ENCODE measurements at regions of chr6 and their contacts with region 1.

Region 1: DNA sequence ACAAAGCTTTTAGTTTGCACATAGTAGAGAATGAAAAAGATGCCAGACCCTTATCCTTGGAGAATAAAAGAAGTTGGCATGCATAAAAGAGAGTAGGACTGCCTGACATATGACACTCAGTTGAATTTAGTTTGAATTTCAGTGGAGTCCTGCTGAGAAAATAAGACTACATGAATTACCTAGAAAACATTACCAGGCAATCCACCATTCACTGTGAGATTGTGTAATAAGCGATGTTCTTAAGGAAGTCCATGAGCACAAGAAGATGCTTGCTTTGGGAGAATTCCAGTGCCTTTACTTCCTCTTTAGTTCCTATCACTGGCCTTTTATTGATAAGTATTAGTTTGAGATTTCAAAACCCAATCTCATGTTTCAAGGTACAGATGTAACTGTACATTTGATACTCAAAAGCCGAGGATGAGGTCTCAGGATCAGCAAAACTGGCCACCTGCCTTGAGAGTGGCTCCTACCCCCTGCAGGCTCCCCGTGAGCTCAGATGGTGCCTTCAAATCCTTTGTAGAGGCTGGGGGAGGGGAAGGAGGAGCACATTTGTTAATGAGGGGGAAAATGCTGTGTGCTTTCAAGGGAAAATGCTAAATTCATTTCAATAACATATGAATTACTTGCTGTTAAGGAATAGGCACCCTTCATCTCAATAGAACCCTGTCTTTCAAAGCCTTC is 11.2 kb upstream of the UNC93A start:
- DNase-seq: no peak
- ATAC-seq: no peak
- H3K4me3 ChIP-seq: no peak overlapping the region
- H3K27ac ChIP-seq: no peak overlapping the region
- H3K4me1 ChIP-seq: no peaks in the 10 kb centered on the region
- H3K27me3 ChIP-seq: peaks cover 0 to 36% (median 22%) of the 10 kb centered on the region in 7 donors
- CTCF ChIP-seq: no peak

Region 2: DNA sequence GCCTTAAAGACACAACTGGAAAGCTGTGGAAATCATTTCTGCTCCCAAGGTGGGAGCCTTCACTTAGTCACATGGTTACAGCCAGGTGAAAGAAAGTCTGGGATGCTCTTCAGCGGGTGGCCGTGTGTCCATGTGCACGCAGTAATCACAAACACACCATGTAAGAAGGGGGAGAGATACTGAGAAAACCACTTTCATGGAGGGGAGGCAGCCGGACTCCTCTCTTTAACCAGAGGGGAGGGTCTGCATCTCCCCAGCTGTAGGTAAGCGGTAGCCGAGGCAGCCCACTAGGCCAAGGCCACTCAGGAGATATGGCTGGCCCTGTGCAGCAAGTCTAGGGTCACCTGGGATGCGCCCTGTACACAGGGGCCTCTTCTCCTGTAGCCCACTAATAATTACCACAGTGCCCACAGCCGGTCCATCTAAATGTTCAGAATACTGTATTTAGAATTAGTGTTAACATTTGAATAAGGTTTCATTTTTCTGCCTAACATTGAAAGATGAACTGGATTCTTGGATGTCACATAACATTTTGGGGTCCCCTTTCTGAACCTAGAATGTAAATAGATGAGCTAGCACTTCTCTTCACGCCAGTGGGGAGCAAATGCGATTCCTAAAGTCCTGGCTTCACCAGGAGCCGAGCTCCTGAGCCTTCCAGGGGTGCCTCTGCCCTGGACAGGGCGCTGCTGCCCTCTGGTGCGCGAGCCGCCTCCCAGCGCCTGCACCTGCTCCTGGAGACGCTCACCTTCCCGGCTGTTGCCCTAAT is 138.1 kb before region 1 on chr6:
- intact Hi-C with region 1: no loop called
- DNase-seq: peak; percentile 18 to 56
- ATAC-seq: peak; percentile 71 to 91 (median 86)
- H3K4me3 ChIP-seq: no peak overlapping the region
- H3K27ac ChIP-seq: no peak overlapping the region
- H3K4me1 ChIP-seq: peaks cover 0 to 5% (median 0%) of the 10 kb centered on the region in 9 donors
- H3K27me3 ChIP-seq: peaks cover 0 to 69% (median 54%) of the 10 kb centered on the region in 7 donors
- CTCF ChIP-seq: peak; percentile 50 to 82 (median 76)

Region 3: DNA sequence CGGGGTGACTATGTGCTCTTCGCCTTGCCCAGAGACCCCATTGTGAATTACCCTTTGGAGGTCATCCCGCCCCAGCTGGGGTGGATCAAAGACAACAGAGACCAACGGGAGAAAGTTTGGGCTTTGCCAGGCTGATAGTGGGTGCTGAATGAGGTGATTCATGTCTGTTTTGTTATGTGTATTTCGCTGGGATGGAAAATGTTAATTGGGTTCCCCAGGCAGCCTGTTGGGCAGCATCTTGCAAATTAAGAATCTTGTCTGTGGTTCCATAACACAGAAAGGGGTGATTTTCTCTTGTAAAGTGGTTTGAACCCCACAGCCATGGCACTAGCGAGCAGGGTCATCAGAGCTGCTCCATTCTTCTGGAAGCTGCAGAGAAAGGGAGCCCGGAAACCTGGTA is 51.9 kb before region 1 on chr6:
- intact Hi-C with region 1: loop called in 5 of 10 experiments (anchors 5 to 10 kb)
- DNase-seq: no peak
- ATAC-seq: no peak
- H3K4me3 ChIP-seq: no peak overlapping the region
- H3K27ac ChIP-seq: no peak overlapping the region
- H3K4me1 ChIP-seq: no peaks in the 10 kb centered on the region
- H3K27me3 ChIP-seq: peaks cover 0 to 48% (median 40%) of the 10 kb centered on the region in 7 donors
- CTCF ChIP-seq: no peak